ENCODE measurements at regions of chr19 and their contacts with region 1.

Region 1: DNA sequence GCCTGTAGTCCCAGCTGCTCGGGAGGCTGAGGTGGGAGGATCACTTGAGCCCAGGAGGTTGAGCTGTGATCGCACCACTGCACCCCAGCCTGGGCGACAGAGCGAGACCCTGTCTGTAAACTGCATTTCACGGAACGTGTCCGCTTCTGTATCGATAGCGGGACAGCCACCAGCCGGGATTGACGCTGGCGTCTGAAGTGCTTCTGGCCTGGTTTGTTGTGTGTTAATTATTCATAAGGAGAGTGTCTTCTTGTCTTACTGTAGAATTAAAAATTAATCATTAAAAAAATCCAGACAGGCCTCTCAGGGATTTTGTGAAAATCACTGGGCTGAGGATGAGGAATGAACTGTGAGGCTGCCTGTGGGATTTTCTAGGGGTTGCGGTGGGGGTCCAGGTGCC is 16.2 kb upstream of the MISP start:
- DNase-seq: no peak
- ATAC-seq: no peak

Region 2: DNA sequence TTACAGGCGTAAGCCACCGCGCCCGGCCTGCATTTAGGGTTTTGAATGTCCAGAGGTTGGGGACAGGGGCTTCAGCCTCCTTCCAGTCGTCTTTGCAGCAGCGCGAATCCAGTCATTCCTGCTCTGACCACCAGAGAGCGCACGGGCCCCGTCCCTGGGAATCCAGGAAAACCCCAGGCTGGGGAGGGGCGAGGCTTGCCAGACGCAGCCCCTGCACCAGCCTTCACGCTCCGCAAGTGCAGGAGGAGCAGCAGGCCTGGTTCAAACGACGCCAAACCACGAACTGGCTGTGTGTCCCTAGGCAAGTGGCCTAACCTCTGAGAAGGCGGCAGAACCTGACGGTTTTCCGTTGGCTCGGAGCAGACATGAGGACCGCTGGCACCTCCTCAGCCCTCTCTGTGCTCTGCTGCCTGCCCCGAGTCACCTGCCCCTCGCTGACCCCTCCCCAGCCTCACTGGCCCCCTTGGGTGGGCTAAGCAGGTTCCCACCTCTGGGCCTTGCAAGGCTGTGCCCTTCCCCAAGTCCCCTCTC is 69.7 kb before region 1 on chr19:
- intact Hi-C with region 1: loop called (anchors 1 kb)
- DNase-seq: peak; percentile 91
- ATAC-seq: peak; percentile 56